OCI-LY7 (cell line): ENCODE measurements at regions of chr5 and their contacts with region 1.

Region 1: DNA sequence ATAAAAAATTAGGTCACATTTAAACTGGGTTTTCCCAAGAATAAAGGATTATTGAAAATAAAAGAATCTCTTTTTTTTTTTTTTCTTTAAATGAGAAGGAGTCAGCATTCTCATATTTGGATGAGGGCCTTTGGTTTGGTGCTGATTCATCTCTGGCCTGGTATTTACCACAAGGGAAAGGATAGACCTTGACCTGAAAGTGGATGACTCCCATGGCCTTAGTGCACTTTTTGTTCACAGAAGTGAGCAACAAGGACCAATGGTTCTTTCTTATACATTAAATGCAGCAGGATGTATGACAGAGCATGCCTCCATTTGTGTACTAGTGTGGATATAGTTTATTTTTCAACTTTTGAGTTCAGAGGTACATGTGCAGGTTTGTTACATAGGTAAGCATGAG is 6.9 kb downstream of the YTHDC2 start:
- DNase-seq: no peak
- H3K4me3 ChIP-seq: no peak overlapping the region
- H3K27ac ChIP-seq: peak overlapping the region; percentile 10
- H3K4me1 ChIP-seq: peaks cover 62% of the 10 kb centered on the region
- CTCF ChIP-seq: no peak

Region 2: GRCh38 chr5:112976432-112977309 is 543.8 kb before region 1 on chr5 and contains the start of gene DCP2:
- CTCF ChIA-PET with region 1: interaction called, 3 read pairs
- POLR2A ChIA-PET with region 1: interaction called, 6 read pairs
- intact Hi-C with region 1: loop called (anchors 5 kb)
- DNase-seq: peak; percentile 100
- H3K4me3 ChIP-seq: peak within 1 kb of the TSS; percentile 92
- H3K27ac ChIP-seq: peak within 1 kb of the TSS; percentile 73
- H3K4me1 ChIP-seq: peaks cover 36% of the 10 kb centered on the region
- CTCF ChIP-seq: no peak
- total RNA-seq, gene DCP2: 69.3 and 81.3 TPM in 2 replicates

Region 3: GRCh38 chr5:113581388-113581787 is 61.0 kb after region 1 on chr5:
- CTCF ChIA-PET with region 1: no interaction called
- POLR2A ChIA-PET with region 1: no interaction called
- intact Hi-C with region 1: no loop called
- DNase-seq: no peak
- H3K4me3 ChIP-seq: no peak overlapping the region
- H3K27ac ChIP-seq: no peak overlapping the region
- H3K4me1 ChIP-seq: no peaks in the 10 kb centered on the region
- CTCF ChIP-seq: no peak

Region 4: GRCh38 chr5:113692891-113693457 is 172.5 kb after region 1 on chr5:
- CTCF ChIA-PET with region 1: no interaction called
- POLR2A ChIA-PET with region 1: no interaction called
- intact Hi-C with region 1: no loop called
- DNase-seq: no peak
- H3K4me3 ChIP-seq: no peak overlapping the region
- H3K27ac ChIP-seq: no peak overlapping the region
- H3K4me1 ChIP-seq: no peaks in the 10 kb centered on the region
- CTCF ChIP-seq: no peak